Posterior cingulate gyrus (tissue), 11 donors: ENCODE measurements at regions of chr14 and their contacts with region 1.

Region 1: DNA sequence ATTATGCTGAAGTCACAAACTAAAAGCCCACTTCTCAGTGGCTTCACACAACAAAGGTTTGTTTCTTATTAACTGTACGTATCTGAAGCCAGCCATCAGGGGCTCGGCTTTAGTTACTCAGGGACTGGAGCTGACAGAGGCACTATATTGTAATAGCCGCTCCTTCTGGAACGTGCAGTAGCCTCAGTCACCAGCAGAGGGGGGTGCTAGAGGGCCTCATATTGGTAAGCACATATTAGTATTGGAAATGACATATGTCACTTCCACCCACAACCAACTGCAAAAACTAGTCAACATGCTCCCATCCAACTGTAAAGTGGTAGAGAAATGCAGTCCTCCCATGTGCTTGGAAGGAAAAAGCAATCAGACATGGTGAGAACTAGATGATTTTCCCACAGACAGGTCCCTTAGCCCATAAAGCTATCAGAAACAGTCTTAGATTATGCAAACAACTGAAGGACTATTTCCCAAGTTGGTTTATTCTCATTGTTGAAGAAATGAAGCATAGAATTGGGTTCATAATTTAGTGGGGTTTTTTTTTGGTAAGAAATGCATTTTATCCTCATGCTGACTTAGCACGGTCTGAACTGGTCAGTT is 183.6 kb upstream of the G2E3 start:
- DNase-seq: peak in 7 of 10 donors; percentile 7 to 91 (median 62)

Region 2: DNA sequence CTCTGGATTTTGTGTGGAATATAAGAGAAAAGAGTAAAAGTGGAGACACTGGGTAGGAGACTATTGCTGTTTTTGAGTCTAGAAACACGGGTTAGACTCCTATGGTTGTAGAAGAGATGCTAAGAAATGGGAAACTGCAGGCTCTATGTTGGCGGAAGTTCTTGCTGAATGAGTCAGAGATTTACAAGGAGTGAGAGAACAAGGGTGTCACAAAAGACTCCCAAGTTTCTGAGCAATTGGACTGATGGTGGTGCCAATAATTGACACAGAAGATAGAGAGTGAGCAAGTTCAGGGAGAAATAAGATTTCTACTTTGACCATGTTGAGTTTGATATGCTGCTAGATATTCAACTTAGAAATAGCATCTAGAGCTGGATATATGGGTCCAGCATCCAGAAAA is 445.1 kb before region 1 on chr14:
- intact Hi-C with region 1: no loop called
- DNase-seq: no peak

Region 3: GRCh38 chr14:30270200-30271161 is 104.9 kb before region 1 on chr14:
- intact Hi-C with region 1: no loop called
- DNase-seq: peak; percentile 48 to 96 (median 82)

Region 4: DNA sequence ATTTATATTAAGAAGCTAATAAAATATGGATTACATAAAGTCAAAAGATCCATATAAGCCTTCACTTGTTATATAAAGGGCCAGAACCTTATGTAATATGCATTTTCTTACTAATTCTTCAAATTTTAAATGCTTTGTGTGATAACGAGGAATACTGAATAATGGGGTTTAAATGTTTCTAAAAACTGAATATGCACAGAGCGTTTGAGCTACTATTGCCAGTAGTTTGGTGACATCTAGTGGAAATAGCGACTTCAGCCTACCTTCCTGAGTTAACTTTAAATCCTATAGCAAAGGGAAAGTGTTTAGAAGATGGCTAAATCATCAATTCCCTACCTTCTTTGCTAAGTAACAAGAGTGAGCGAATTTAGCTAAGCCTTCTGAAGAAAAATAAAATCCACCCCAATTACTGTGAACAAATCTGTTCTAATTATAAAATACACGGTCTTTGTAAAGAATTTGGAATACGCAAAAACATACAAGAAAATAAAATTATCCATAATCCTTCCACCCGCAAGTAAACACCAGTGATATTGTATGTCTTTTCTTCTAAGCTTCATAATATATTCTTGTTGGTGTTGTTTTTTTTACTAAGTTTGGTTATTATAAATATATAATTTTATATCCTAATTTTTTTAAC is 68.1 kb after region 1 on chr14:
- intact Hi-C with region 1: loop called (anchors 1 kb)
- DNase-seq: no peak

Region 5: DNA sequence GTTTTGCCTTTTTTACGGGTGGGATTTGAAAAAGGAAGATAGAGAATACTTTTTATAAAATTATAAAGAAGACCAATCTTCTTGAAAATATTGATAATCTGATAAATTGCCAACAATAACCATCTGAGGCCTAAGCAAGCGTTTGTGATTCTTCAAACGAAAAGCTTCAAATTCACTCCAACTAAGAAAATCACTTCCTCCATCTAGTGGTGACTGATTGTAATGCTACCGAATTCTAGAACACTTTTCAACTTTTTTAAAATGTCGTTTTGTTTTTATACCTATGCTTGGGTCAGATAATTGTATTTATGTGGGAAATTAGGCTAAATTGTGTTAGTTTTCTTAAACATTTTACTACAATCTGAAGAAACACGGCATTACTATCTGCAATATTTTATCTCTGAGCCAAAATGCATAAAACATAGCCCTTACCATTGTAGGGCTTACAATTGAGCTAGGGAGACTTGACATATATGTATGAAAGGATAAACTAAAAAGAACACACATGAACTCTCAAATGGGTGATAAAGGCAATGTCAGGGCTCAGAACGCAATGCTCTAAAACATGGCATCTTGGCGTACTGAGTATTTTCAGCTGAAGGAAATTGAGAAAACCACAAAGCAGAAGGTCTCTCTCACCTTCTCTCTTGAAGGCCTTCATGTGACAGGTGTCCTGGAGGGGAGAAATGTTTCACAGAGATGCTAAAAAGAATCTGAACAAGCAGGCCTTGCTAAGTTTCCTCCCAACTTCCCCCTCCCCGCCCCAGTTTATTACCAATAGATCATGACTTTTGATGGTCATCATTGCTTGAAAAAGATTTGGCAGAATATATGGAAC is 146.7 kb after region 1 on chr14:
- intact Hi-C with region 1: loop called (anchors 5 kb)
- DNase-seq: no peak

Region 6: DNA sequence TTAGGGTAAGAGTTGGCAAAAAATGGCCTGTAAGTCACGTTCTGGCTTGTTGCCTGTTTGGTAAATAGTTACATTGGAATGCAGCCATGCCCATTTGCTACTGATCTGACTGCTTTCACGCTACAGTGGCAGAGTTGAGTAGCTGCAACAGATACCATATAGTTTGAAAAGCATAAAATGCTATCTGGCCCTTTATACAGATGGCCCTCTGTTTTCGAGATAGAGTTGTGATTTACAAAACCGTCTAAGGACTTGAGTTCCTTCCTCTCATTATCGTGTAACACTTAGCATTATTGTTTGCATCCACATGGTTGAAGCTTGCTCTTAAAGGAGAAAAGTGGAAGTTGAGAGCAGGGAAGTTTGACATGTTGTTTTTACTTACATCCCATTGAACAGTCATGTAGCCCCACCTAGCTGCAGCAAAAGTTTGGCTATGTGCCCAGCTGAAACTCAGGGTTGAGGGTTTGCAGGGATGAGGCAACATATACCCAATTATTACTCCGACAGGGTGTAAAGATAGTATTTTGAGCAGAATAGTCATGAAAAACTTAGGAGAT is 235.5 kb after region 1 on chr14:
- intact Hi-C with region 1: loop called (anchors 5 kb)
- DNase-seq: peak in 6 of 10 donors; percentile 13 to 86 (median 38)